BJ (cell line): ENCODE measurements at regions of chr3 and their contacts with region 1.

Region 1: DNA sequence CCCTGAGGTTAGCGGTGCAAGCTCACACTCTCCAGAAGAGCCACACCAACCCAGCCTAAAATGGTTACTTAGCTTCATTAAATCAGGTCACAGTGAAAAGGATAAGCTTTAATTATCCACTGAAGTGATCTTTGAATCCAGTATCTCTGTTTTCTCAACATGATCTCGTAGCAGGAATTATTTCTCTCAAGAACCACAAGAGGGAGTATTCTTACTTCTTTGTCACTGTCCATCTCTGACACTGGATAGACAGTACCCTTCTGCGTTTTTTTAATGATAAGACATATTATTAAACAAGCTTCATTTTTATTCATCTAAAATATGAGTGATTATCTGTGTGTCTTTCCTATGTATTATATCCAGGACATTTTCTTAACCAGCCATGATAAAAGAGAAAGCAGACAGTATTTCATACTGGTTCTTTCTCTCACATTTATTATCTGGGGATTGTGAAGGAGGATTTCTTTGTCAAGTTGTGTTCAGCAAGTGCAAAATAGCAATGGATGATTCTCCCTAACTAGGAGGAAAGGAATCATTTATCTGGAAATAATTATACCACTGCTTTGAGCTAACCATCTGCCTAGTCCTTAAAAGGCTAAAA is 105.4 kb upstream of the CCDC54 start:
- DNase-seq: no peak
- H3K4me3 ChIP-seq: no peak overlapping the region
- H3K27me3 ChIP-seq: no peaks in the 10 kb centered on the region
- CTCF ChIP-seq: peak; percentile 59

Region 2: DNA sequence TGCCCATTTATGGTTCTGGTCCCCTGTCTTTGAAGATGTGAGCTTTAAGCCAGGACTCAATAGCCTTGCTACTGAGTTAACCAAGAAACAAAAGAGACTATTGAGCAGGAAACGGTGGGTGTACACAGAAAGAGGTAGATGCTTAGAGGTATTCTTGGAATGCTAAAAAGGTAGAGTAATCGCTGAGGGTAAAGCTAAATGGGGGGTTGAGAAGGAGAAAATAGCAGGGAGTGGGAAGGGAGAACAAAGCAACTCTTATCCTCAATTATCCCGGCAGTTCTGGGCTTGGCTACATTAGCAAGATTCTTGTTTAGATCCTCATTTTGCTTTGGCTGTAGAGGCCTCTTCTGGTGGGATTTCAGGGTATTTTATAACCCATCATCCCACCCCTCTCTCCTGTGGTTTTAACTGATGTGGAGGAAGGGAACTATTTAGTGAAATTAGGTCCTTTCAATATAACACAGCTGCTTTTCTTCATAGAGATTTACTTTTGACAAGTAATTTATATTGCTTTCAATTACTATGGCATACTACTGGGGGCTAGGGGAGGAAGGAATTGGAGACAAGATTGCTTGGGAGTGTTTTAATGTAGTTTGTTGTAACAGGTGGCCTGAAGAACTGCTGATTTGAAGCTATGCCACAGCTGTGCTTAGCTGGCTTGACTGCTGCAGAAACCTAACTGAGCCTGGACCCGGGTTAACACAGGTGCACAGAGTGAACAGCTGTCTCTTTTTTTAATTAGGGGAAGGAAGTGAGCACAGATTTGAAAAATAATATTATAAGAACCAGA is 128.9 kb before region 1 on chr3:
- CTCF ChIA-PET with region 1: no interaction called
- POLR2A ChIA-PET with region 1: no interaction called
- DNase-seq: no peak
- H3K4me3 ChIP-seq: no peak overlapping the region
- H3K27me3 ChIP-seq: no peaks in the 10 kb centered on the region
- CTCF ChIP-seq: no peak

Region 3: GRCh38 chr3:107235928-107236315 is 36.0 kb before region 1 on chr3:
- CTCF ChIA-PET with region 1: interaction called, 19 read pairs
- POLR2A ChIA-PET with region 1: no interaction called
- DNase-seq: no peak
- H3K4me3 ChIP-seq: peak overlapping the region; percentile 41
- H3K27me3 ChIP-seq: no peaks in the 10 kb centered on the region
- CTCF ChIP-seq: peak; percentile 76

Region 4: DNA sequence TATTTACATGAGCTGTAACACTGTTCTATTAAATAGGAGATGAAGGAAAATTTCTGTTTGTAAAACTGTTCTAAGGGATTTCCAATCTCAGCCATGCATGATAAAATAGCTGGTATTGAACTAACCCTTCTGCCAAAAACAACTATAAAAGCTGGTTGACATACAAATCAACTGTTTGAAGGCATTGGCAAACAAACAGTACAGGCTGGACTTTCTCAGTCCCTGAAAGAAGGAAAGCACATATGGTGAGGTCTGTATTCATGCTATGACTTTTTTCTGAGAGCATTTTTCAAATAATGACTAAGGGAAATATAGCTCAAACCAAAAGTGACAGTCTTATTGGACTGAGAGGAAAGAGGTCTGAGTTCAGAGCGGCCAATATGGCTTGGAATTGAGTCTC is 11.7 kb before region 1 on chr3:
- CTCF ChIA-PET with region 1: interaction called, 14 read pairs
- POLR2A ChIA-PET with region 1: no interaction called
- DNase-seq: no peak
- H3K4me3 ChIP-seq: no peak overlapping the region
- H3K27me3 ChIP-seq: no peaks in the 10 kb centered on the region
- CTCF ChIP-seq: no peak

Region 5: GRCh38 chr3:107404727-107405469 is 133.0 kb after region 1 on chr3:
- CTCF ChIA-PET with region 1: interaction called, 13 read pairs
- POLR2A ChIA-PET with region 1: no interaction called
- DNase-seq: peak; percentile 59
- H3K4me3 ChIP-seq: no peak overlapping the region
- H3K27me3 ChIP-seq: no peaks in the 10 kb centered on the region
- CTCF ChIP-seq: no peak

Region 6: GRCh38 chr3:107421170-107421792 is 149.4 kb after region 1 on chr3:
- CTCF ChIA-PET with region 1: interaction called, 113 read pairs
- POLR2A ChIA-PET with region 1: no interaction called
- DNase-seq: no peak
- H3K4me3 ChIP-seq: 0 out of 2 replicates have a peak overlapping the region, but pooled peaks have one; percentile 22
- H3K27me3 ChIP-seq: no peaks in the 10 kb centered on the region
- CTCF ChIP-seq: peak; percentile 65